Heart left ventricle (tissue), 16 donors: ENCODE measurements at regions of chr15 and their contacts with region 1.

Region 1: DNA sequence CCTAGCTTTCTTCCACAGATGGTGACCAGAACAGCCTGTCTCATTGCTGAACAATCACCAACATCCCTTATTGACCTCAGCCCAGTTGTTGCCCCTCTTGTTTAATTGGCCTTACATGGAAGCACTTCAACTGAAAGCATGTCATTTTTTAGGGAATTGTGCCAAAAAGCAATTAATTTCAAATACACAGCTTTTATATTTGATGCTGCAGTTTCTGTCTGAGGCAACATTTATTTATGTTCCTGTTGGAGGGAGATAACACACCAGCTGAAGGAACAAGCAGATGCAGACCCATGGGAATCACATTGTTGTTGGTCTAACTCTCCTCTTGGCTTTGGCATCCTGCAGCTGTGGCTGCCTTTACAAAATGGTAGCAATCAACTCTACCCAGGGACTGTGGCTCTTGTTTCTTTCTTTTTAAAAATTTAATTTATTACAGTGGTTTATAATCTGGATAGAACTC is 498.1 kb upstream of the RGMA start:
- DNase-seq: peak in 3 of 5 donors; percentile 34 to 56 (median 43)
- ATAC-seq: peak in 3 of 4 donors; percentile 77 to 86 (median 80)
- H3K4me3 ChIP-seq: no peak overlapping the region
- H3K27ac ChIP-seq: peak overlapping the region in 4 of 12 donors; percentile 41 to 75 (median 49)
- H3K4me1 ChIP-seq: peaks cover 0 to 9% (median 0%) of the 10 kb centered on the region in 12 donors
- H3K27me3 ChIP-seq: no peaks in the 10 kb centered on the region
- CTCF ChIP-seq: no peak
- POLR2A ChIP-seq: no peak

Region 2: GRCh38 chr15:93200081-93200836 is 386.8 kb before region 1 on chr15:
- intact Hi-C with region 1: no loop called
- DNase-seq: no peak
- ATAC-seq: peak in 1 of 4 donors; percentile 31
- H3K4me3 ChIP-seq: no peak overlapping the region
- H3K27ac ChIP-seq: no peak overlapping the region
- H3K4me1 ChIP-seq: peaks cover 0 to 9% (median 0%) of the 10 kb centered on the region in 12 donors
- H3K27me3 ChIP-seq: no peaks in the 10 kb centered on the region
- CTCF ChIP-seq: no peak
- POLR2A ChIP-seq: no peak

Region 3: GRCh38 chr15:93603550-93603949 is 16.5 kb after region 1 on chr15:
- intact Hi-C with region 1: no loop called
- DNase-seq: no peak
- ATAC-seq: no peak
- H3K4me3 ChIP-seq: no peak overlapping the region
- H3K27ac ChIP-seq: no peak overlapping the region
- H3K4me1 ChIP-seq: no peaks in the 10 kb centered on the region
- H3K27me3 ChIP-seq: peaks cover 0 to 17% (median 0%) of the 10 kb centered on the region in 9 donors
- CTCF ChIP-seq: no peak
- POLR2A ChIP-seq: no peak

Region 4: GRCh38 chr15:93649691-93650235 is 62.7 kb after region 1 on chr15:
- intact Hi-C with region 1: loop called in 1 of 10 experiments (anchors 10 kb)
- DNase-seq: no peak
- ATAC-seq: no peak
- H3K4me3 ChIP-seq: no peak overlapping the region
- H3K27ac ChIP-seq: no peak overlapping the region
- H3K4me1 ChIP-seq: no peaks in the 10 kb centered on the region
- H3K27me3 ChIP-seq: no peaks in the 10 kb centered on the region
- CTCF ChIP-seq: no peak
- POLR2A ChIP-seq: no peak